GM13977 (cell line): ENCODE measurements at regions of chr22 and their contacts with region 1.

Region 1: DNA sequence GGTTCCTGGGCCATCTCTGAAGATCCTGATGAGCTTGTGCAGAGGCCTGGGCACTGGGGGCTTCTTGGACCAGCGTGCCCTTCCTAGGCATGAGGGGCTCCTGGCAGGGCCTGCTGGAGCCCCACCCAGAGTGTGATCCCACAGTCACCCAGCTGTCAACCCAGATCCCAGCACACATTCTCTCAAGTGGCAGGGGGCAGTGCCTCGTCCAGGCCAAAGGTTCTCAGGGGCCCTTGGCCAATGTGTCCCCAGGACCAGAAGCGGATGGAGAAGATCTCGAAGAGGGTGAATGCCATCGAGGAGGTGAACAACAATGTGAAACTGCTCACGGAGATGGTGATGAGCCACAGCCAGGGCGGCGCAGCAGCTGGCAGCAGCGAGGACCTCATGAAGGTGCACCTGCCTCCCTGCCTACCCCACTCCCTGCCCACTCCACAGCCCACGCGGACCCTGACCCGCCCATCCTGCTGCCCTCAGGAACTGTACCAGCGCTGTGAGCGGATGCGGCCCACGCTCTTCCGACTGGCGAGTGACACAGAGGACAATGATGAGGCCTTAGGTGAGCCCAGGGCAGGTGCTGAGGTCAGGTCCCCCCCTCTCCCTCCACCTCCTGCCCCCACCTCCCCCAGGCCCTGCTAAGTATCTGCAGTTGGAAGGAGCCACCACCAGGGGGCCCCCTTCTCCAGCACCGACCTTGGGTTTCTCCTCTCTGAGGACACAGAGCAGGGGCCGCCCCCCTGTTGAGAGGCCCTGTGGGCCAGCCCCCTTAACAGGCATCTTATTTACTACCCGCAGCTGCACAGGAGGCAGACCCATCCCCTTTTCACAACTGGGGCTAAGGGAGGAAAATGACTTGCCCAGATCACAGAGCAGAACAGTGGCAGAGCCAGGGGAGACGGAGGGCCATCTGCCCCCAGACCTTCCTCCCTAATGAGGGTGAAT is 14.7 kb downstream of the GGA1 start:
- DNase-seq: peak; percentile 84
- CTCF ChIP-seq: peak; percentile 83

Region 2: GRCh38 chr22:37486224-37486845 is 137.0 kb before region 1 on chr22 and contains the start of gene MFNG:
- in situ Hi-C with region 1: no loop called
- DNase-seq: peak; percentile 95
- CTCF ChIP-seq: no peak

Region 3: DNA sequence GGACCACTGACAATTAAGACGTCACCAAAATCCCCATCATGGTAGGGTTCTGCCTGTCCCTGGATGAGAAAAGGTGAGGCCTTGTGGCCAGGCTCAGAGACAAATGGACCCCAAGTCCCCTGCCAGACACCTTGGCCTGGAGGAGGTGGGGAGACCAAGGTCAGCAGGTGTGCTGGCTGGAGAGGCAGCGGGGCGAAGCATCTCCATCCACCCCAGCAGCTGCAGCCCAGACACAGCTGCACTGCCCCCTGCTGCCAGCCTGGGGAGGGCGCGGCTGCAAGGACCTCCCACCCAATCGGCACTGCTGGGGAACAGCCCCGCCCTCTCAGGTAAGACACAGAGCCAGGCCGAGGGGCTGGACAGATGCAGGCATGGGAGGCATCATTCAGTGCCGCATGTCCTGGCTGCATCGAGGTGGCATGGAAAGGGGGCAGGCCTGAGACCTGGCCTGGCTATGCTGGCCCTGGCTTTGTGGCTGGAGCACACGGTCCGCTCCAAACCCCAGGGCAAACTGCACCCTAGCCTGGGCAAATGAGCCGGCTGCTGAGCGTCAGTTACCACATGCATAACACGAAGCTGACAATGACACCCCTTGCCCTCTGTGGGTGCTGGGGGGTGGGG is 124.9 kb before region 1 on chr22:
- in situ Hi-C with region 1: no loop called
- DNase-seq: peak; percentile 89
- CTCF ChIP-seq: peak; percentile 84

Region 4: DNA sequence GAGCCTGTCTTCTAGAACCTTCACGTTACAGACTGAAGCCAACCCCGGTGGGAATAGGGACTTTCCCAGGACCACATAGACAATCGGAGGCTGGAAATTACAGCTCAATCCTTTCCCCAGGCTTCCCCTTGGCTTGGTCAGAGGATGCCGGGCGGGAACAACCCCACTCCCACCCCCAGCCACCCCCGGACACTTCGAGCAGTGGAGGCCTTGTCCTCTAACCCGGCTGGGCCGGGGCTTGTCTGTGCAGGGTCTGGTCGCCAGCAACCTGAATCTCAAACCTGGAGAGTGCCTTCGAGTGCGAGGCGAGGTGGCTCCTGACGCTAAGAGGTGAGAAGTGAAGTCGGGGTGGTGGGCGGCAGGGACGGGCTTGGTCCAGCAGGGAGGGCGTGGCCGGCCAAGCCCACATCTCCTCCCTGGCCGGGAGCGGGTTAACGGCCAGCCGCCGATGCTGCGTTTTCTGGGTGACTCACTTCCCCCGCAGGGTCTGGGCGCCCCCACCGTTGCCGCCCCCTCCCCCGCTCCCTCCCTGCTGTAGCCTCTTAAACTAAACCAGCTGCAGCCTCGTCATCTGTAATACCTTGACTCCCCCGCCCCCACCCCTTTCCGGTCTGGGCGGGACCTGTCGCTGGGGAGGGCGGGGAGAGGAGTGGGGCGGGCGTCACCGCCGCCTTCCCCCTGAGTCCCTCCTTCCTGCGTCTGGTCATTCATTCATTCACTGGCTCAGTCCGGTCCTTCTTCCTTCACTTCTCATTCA is 53.6 kb after region 1 on chr22:
- in situ Hi-C with region 1: loop called (anchors 10 kb)
- DNase-seq: peak; percentile 89
- CTCF ChIP-seq: no peak

Region 5: GRCh38 chr22:37701141-37701786 is 77.9 kb after region 1 on chr22:
- in situ Hi-C with region 1: no loop called
- DNase-seq: no peak
- CTCF ChIP-seq: no peak